Activated B cell treated with CpG ODN at 0.5 μM for 24 hours (primary cell): ENCODE measurements at regions of chr17 and their contacts with region 1.

Region 1: GRCh38 chr17:48024937-48025906 is 12.4 kb downstream of the COPZ2 start:
- DNase-seq: peak; percentile 91
- ATAC-seq: peak; percentile 89
- H3K4me3 Mint-ChIP-seq: peak overlapping the region; percentile 89
- H3K27ac Mint-ChIP-seq: peak overlapping the region; percentile 91
- H3K4me1 Mint-ChIP-seq: peaks cover 35% of the 10 kb centered on the region
- H3K27me3 Mint-ChIP-seq: peaks cover 9% of the 10 kb centered on the region
- CTCF ChIP-seq: no peak

Region 2: DNA sequence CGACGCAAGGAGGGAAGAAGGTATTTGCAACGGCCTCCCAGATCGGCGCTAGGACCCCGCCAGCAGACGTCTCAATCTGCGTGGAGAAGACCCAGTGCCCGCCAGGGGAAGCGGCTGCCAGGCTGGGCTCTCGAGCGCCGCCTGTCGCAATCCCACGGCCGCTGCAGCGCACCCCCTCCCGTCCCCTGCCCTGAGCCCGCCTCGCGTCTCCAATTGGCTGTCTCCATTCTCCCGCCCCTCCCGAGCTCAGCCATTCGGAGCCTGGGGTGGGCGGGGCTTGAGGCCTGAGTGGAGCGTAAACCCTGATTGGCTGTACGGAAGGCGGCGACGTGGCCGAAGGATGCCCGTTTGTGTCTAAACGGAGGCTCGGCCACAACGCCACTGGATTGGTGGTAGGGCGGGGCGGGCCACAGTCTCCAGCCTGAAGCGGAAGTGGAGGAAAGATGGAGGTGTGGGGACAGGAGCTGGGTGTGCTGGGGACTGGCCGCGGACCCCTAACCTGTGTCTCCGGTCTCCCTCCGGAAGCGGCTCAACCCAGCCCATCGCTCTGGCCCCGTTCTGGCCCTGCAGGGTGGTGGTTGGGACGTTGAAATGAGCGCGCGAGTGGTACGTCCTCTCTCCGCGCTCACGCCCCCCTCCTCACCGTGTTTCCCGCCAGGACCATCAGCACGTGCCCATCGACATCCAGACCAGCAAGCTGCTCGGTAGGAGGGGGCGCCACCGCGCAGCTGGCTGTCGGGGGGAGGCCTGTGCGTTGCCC is 54.3 kb before region 1 on chr17 and contains the start of gene CDK5RAP3:
- CTCF ChIA-PET with region 1: interaction called, 4 read pairs
- POLR2A ChIA-PET with region 1: interaction called, 6 read pairs
- intact Hi-C with region 1: loop called (anchors 2 kb)
- DNase-seq: peak; percentile 98
- ATAC-seq: peak; percentile 99
- H3K4me3 Mint-ChIP-seq: peak within 1 kb of the TSS; percentile 97
- H3K27ac Mint-ChIP-seq: peak within 1 kb of the TSS; percentile 91
- H3K4me1 Mint-ChIP-seq: peaks cover 30% of the 10 kb centered on the region
- H3K27me3 Mint-ChIP-seq: no peaks in the 10 kb centered on the region
- CTCF ChIP-seq: peak; percentile 38
- total RNA-seq, gene CDK5RAP3: 275 and 286 TPM in 2 replicates

Region 3: GRCh38 chr17:48047741-48048383 is 22.6 kb after region 1 on chr17 and contains the start of gene NFE2L1:
- CTCF ChIA-PET with region 1: interaction called, 10 read pairs
- POLR2A ChIA-PET with region 1: interaction called, 37 read pairs
- intact Hi-C with region 1: loop called (anchors 1 kb)
- DNase-seq: peak; percentile 89
- ATAC-seq: peak; percentile 94
- H3K4me3 Mint-ChIP-seq: peak within 1 kb of the TSS; percentile 97
- H3K27ac Mint-ChIP-seq: peak within 1 kb of the TSS; percentile 100
- H3K4me1 Mint-ChIP-seq: peaks cover 62% of the 10 kb centered on the region
- H3K27me3 Mint-ChIP-seq: no peaks in the 10 kb centered on the region
- CTCF ChIP-seq: no peak
- total RNA-seq, gene NFE2L1: 127 and 141 TPM in 2 replicates

Region 4: DNA sequence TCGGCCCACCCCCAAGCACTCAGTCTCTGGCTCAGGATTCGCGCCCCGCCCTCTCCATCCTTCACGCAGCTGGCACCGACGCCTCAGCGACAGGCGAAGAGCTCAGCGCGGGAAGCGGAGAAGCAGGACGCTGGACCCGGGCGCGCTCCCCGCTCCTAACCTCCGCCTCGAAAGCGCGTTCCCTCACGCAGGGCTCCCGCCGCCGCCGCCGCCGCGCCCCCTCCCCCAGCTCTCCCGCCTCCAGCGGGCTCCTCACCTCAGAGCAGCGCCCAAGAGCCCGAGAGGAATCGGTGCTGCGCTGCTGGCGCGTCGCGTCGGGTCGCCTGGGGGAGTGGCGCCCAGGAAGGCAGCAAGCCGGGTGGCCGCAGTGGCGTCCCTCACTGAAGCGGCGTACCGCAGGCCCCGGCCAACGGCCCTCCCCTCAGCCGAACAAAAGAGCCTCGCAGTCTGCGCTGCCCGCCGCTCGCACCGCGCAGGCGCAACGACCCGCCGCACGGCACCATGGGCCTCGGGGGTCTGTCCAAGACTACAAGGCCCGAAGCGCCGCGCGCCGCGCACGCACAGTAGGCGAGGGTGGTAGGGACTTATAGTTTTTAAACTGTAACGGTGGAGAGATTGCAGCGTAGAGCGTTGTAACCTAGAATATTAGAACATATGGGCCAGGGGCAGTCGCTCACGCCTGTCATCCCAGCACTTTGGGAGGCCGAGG is 75.9 kb after region 1 on chr17 and contains the start of gene CBX1:
- CTCF ChIA-PET with region 1: interaction called, 4 read pairs
- POLR2A ChIA-PET with region 1: interaction called, 3 read pairs
- intact Hi-C with region 1: loop called (anchors 1 kb)
- DNase-seq: peak; percentile 92
- ATAC-seq: peak; percentile 92
- H3K4me3 Mint-ChIP-seq: peak within 1 kb of the TSS; percentile 94
- H3K27ac Mint-ChIP-seq: peak within 1 kb of the TSS; percentile 92
- H3K4me1 Mint-ChIP-seq: peaks cover 50% of the 10 kb centered on the region
- H3K27me3 Mint-ChIP-seq: no peaks in the 10 kb centered on the region
- CTCF ChIP-seq: no peak
- total RNA-seq, gene CBX1: 46.0 and 49.5 TPM in 2 replicates

Region 5: DNA sequence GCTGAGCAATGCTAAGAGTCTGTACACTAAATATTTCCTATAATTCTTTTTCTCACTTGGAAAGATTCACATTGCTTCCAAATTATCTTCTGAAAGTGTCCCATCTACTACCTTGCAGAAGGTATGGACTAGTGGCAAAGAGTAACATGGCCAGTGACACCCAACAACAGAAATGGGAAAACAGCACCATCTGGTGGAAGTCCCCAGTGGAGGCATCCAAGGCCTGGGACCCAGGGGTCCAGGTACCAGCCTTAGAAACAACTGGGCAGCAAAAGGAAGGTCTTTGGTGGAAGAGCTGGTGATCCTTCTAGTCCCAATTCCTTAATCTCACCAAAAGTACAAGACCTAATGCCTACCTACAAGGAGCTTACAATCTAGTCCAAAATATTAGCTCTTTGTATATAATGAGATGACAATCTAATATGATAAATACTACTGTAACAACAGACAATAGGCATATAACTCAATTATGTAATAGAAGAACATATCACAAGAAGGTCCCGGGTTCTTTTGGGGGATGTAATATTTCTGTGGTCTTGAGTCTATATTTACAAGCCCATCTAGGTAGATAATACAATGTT is 349.5 kb after region 1 on chr17:
- CTCF ChIA-PET with region 1: no interaction called
- POLR2A ChIA-PET with region 1: no interaction called
- intact Hi-C with region 1: loop called (anchors 1 kb)
- DNase-seq: no peak
- ATAC-seq: peak; percentile 51
- H3K4me3 Mint-ChIP-seq: no peak overlapping the region
- H3K27ac Mint-ChIP-seq: peak overlapping the region; percentile 80
- H3K4me1 Mint-ChIP-seq: peaks cover 23% of the 10 kb centered on the region
- H3K27me3 Mint-ChIP-seq: no peaks in the 10 kb centered on the region
- CTCF ChIP-seq: no peak

Region 6: GRCh38 chr17:48618256-48618897 is 593.2 kb after region 1 on chr17:
- CTCF ChIA-PET with region 1: interaction called, 9 read pairs
- POLR2A ChIA-PET with region 1: no interaction called
- intact Hi-C with region 1: loop called (anchors 1 kb)
- DNase-seq: peak; percentile 77
- ATAC-seq: peak; percentile 84
- H3K4me3 Mint-ChIP-seq: no peak overlapping the region
- H3K27ac Mint-ChIP-seq: peak overlapping the region; percentile 9
- H3K4me1 Mint-ChIP-seq: peaks cover 26% of the 10 kb centered on the region
- H3K27me3 Mint-ChIP-seq: peaks cover 78% of the 10 kb centered on the region
- CTCF ChIP-seq: peak; percentile 66